PC-9 (cell line): ENCODE measurements at regions of chr10 and their contacts with region 1.

Region 1: DNA sequence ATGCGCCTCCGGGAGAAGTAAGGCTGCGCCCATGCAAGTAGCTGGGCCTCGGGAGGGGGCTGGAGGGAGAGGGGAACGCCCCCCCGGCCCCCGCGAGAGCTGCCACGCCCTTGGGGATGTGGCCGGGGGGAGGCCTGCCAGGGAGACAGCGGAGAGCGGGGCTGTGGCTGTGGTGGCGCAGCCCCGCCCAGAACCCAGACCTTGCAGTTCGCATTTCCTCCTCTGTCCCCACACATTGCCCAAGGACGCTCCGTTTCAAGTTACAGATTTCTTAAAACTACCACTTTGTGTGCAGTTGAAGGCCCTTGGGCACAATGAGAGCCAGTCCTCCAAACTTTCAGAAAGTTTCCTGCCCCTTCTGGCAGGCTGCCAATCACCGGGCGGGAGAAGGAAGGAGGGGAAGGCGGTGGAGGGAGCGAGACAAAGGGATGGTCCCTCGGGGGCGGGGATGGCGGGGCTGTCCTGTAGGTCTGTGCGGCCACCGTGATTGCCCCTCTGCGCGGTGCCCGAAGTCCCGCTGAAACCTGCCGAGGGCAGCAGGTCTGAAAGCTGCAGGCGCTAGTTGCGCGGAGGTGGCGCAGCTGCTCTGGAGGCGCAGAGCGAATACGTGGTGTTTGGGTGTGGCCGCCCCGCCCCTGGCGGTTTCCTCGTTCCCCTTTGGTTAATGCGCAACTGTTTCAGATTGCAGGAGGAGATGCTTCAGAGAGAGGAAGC is 2.1 kb downstream of the VIM start:
- DNase-seq: peak; percentile 80 to 87
- H3K4me3 ChIP-seq: peak overlapping the region; percentile 75
- H3K27ac ChIP-seq: peak overlapping the region; percentile 87
- H3K4me1 ChIP-seq: peaks cover 9% of the 10 kb centered on the region
- H3K27me3 ChIP-seq: peaks cover 13% of the 10 kb centered on the region; the same call in 1 of the 2 replicates
- CTCF ChIP-seq: no peak

Region 2: DNA sequence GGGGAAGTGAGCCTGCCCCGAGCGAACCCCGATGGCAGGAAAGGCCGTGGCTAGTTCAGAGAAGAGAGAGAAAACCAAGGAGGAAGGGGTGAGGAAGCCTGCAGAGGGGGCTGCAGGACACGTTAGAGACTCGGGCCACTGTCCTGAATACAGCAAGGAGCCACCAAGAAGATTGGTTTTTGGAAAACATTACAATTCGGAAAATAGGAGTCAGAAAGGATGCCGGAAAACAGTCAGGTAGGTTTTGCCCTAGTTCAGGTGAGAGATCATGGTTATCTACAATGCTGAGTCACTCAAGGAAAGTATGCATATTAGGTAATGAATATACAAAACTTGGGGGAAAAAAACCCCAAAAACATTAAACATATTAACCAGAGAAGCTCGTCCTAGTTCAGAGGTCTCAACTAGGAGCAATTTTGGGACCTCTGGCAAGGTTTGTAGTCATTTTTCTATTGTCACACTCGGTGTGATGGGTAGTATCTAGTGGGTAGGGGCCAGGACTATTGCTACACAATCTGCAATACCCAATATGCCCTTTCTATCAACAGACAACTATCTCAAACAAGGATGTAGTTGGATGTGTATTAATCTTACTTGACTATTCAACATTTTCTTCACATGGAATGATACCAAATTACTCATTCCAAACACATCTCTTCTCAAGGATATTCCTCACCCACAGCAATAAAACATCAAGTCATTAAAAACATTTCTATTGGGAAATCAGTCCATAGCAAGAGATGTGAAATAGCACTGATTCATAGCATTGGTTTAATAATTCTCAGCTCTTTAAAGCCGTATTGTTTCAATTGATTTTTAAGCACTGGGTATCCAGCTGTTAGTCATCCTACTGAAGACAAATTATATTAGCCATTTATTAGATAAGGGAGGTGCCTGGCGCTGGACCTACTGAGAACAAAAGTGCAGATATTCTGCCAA is 338.5 kb before region 1 on chr10:
- CTCF ChIA-PET with region 1: no interaction called
- POLR2A ChIA-PET with region 1: no interaction called
- intact Hi-C with region 1: loop called (anchors 1 kb)
- DNase-seq: peak; percentile 35 to 95
- H3K4me3 ChIP-seq: peak overlapping the region; percentile 41; the same call in 1 of the 2 replicates
- H3K27ac ChIP-seq: peak overlapping the region; percentile 94
- H3K4me1 ChIP-seq: peaks cover 21% of the 10 kb centered on the region
- H3K27me3 ChIP-seq: peaks cover 6% of the 10 kb centered on the region; the same call in 1 of the 2 replicates
- CTCF ChIP-seq: peak; percentile 30; the same call in 1 of the 2 replicates

Region 3: GRCh38 chr10:16975188-16975587 is 254.9 kb before region 1 on chr10:
- CTCF ChIA-PET with region 1: no interaction called
- POLR2A ChIA-PET with region 1: no interaction called
- intact Hi-C with region 1: no loop called
- DNase-seq: no peak
- H3K4me3 ChIP-seq: no peak overlapping the region
- H3K27ac ChIP-seq: no peak overlapping the region
- H3K4me1 ChIP-seq: no peaks in the 10 kb centered on the region
- H3K27me3 ChIP-seq: no peaks in the 10 kb centered on the region
- CTCF ChIP-seq: no peak

Region 4: GRCh38 chr10:17023386-17024298 is 206.5 kb before region 1 on chr10:
- CTCF ChIA-PET with region 1: no interaction called
- POLR2A ChIA-PET with region 1: no interaction called
- intact Hi-C with region 1: loop called (anchors 1 kb)
- DNase-seq: peak; percentile 67 to 87
- H3K4me3 ChIP-seq: no peak overlapping the region
- H3K27ac ChIP-seq: no peak overlapping the region
- H3K4me1 ChIP-seq: peaks cover 11% of the 10 kb centered on the region
- H3K27me3 ChIP-seq: no peaks in the 10 kb centered on the region
- CTCF ChIP-seq: no peak

Region 5: DNA sequence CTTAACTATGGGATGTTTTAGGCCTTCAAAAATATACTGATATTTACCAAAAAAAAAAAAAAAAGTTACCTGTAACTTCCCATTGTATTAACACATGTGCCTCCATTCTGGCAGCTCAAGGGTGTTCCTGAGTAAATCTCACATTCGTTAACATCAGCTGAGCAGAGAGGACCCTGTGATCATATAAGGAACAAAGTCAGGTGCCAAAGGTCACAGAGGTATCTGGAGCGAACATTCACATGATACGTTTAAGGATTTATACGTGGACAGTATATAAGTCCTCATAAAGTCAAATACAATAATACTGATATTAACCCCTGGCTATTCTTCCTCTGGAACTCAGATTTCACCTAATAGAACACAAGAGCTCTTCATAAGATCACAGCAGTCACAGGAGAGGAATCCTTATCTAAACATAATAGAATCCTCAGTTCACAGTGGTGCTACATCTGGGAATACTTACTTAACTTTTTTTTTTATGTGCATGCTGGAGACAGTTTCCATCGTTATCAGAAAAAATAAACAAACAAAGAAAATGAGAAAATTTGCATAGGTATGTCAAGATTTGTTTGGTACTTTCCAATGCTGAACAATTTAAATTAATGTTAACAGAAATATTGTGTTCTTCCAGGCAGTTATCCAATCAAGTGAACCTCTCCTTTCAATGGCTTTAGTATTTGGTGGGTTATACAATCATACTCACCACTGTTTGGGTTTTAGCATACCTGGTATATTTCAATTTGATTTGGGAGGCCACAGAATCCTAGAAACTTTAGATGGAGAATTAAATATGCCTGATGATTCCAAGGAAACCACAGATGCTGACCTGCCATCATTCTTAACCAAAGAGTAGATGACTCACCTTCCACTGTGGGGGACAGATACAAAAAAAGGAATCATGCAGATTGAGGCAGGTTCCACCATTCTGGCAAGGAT is 107.1 kb before region 1 on chr10:
- CTCF ChIA-PET with region 1: no interaction called
- POLR2A ChIA-PET with region 1: no interaction called
- intact Hi-C with region 1: loop called (anchors 5 kb)
- DNase-seq: peak in 1 of 2 experiments; percentile 17
- H3K4me3 ChIP-seq: no peak overlapping the region
- H3K27ac ChIP-seq: no peak overlapping the region
- H3K4me1 ChIP-seq: peaks cover 14% of the 10 kb centered on the region
- H3K27me3 ChIP-seq: no peaks in the 10 kb centered on the region
- CTCF ChIP-seq: no peak

Region 6: GRCh38 chr10:17216217-17216900 is 13.8 kb before region 1 on chr10:
- CTCF ChIA-PET with region 1: interaction called, 4 read pairs
- POLR2A ChIA-PET with region 1: interaction called, 5 read pairs
- intact Hi-C with region 1: loop called (anchors 1 kb)
- DNase-seq: peak; percentile 29 to 95
- H3K4me3 ChIP-seq: no peak overlapping the region
- H3K27ac ChIP-seq: peak overlapping the region; percentile 83
- H3K4me1 ChIP-seq: peaks cover 35% of the 10 kb centered on the region
- H3K27me3 ChIP-seq: no peaks in the 10 kb centered on the region
- CTCF ChIP-seq: no peak

Region 7: GRCh38 chr10:17348501-17349349 is 118.6 kb after region 1 on chr10:
- CTCF ChIA-PET with region 1: no interaction called
- POLR2A ChIA-PET with region 1: interaction called, 22 read pairs
- intact Hi-C with region 1: no loop called
- DNase-seq: peak; percentile 83 to 85
- H3K4me3 ChIP-seq: peak overlapping the region; percentile 54
- H3K27ac ChIP-seq: peak overlapping the region; percentile 91
- H3K4me1 ChIP-seq: peaks cover 46% of the 10 kb centered on the region
- H3K27me3 ChIP-seq: no peaks in the 10 kb centered on the region
- CTCF ChIP-seq: no peak